ENCODE measurements at regions of chr6 and their contacts with region 1.

Region 1: GRCh38 chr6:154156135-154156896 is 117.3 kb downstream of the OPRM1 start:
- DNase-seq: peak; percentile 52 to 63
- H3K4me3 ChIP-seq: no peak overlapping the region
- H3K27ac ChIP-seq: no peak overlapping the region
- H3K4me1 ChIP-seq: 0 out of 2 replicates have a peak, but pooled peaks cover 3% of the 10 kb centered on the region
- H3K27me3 ChIP-seq: no peaks in the 10 kb centered on the region
- CTCF ChIP-seq: peak; percentile 63

Region 2: DNA sequence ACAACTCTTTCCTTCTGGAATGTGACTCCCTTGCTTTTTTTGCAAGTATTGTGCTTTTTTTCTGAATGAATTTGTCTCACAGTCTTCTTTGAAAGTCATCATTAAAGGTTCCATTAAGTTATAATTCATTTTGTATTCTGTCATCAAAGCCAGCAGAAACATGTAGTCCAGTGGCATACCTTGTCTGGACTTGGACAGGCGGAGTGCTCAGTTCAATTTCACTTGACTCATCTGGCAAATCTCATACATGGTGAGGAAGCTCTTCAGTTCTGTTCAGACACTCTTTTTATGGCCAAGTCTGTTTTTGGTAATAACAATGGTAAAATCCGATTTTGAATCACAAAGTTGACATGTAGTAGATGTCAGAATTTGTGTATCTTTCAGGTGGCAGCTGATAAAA is 378.1 kb before region 1 on chr6:
- CTCF ChIA-PET with region 1: no interaction called
- POLR2A ChIA-PET with region 1: no interaction called
- intact Hi-C with region 1: no loop called
- DNase-seq: no peak
- H3K4me3 ChIP-seq: no peak overlapping the region
- H3K27ac ChIP-seq: no peak overlapping the region
- H3K4me1 ChIP-seq: no peaks in the 10 kb centered on the region
- H3K27me3 ChIP-seq: no peaks in the 10 kb centered on the region
- CTCF ChIP-seq: no peak

Region 3: GRCh38 chr6:154276810-154277628 is 120.7 kb after region 1 on chr6:
- CTCF ChIA-PET with region 1: interaction called, 6 read pairs
- POLR2A ChIA-PET with region 1: no interaction called
- intact Hi-C with region 1: loop called (anchors 5 kb)
- DNase-seq: peak in 1 of 2 experiments; percentile 40
- H3K4me3 ChIP-seq: no peak overlapping the region
- H3K27ac ChIP-seq: no peak overlapping the region
- H3K4me1 ChIP-seq: no peaks in the 10 kb centered on the region
- H3K27me3 ChIP-seq: no peaks in the 10 kb centered on the region
- CTCF ChIP-seq: peak; percentile 68

Region 4: DNA sequence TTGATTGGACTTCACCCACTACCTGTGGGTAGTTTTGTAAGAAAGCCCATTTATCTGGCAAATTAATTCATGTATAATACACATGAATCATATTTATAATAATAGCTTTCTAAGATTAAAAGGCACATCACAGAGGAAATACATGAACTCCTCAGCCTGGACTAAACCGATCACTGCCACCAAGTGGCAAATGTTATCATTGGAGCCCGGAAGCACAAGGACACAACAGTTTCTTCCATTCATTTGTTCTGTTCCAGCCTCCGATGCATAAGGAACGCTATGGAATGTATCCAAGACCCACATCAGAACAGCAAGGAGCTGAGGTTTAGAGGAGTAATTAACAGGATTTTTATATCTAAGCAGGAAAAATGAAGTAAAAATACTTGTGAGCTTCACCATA is 214.2 kb after region 1 on chr6:
- CTCF ChIA-PET with region 1: no interaction called
- POLR2A ChIA-PET with region 1: no interaction called
- intact Hi-C with region 1: loop called (anchors 10 kb)
- DNase-seq: no peak
- H3K4me3 ChIP-seq: no peak overlapping the region
- H3K27ac ChIP-seq: no peak overlapping the region
- H3K4me1 ChIP-seq: peaks cover 12% of the 10 kb centered on the region
- H3K27me3 ChIP-seq: no peaks in the 10 kb centered on the region
- CTCF ChIP-seq: peak; percentile 44; the same call in 1 of the 2 replicates

Region 5: DNA sequence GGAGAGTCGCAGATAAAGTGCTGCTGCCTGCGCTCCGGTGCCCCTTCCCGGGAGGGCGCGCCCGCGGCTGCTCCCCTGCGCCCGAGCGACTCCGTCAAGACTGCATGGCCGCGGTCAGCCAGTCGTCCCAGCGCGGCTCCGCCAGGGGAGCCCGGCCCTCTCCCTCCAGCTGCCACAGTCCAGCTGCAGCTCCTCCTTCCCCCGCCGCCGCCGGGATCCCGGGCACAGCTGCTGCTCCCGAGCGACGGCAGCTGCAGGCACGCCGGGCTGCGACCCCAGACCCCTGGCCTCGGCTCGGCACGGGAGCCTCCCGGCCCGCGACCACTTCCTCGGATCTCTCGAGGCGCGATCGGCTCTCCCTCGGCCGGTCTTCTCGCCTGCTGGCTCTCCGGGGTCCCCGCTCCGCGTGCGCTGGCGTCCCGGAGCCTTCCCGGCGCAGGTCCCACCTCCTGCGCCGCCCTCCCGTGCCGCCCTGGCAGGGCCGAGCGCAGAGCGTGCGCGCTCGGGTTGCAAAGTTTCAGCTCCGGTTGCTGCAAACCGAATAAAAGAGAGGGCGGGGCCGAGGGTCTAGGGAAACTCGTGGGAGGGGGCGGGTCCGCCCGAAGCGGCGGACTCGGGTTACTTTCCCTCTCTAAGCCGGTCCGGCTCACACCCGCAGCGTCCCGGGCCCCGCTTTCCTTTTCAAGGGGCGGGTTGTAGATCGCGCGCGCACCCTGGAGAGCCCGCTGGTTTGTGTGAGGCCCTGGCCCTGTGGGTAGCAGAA is 354.0 kb after region 1 on chr6 and contains the start of gene CNKSR3:
- CTCF ChIA-PET with region 1: no interaction called
- POLR2A ChIA-PET with region 1: no interaction called
- intact Hi-C with region 1: loop called (anchors 1 kb)
- DNase-seq: peak; percentile 71 to 80
- H3K4me3 ChIP-seq: peak within 1 kb of the TSS; percentile 94
- H3K27ac ChIP-seq: peak within 1 kb of the TSS; percentile 66
- H3K4me1 ChIP-seq: peaks cover 23% of the 10 kb centered on the region
- H3K27me3 ChIP-seq: no peaks in the 10 kb centered on the region
- CTCF ChIP-seq: no peak
- total RNA-seq, gene CNKSR3: 3.4 and 4.7 TPM in 2 replicates

Region 6: GRCh38 chr6:154675602-154676088 is 519.3 kb after region 1 on chr6:
- CTCF ChIA-PET with region 1: no interaction called
- POLR2A ChIA-PET with region 1: no interaction called
- intact Hi-C with region 1: loop called (anchors 1 kb)
- DNase-seq: peak; percentile 77 to 85
- H3K4me3 ChIP-seq: no peak overlapping the region
- H3K27ac ChIP-seq: no peak overlapping the region
- H3K4me1 ChIP-seq: no peaks in the 10 kb centered on the region
- H3K27me3 ChIP-seq: no peaks in the 10 kb centered on the region
- CTCF ChIP-seq: peak; percentile 99

Region 7: GRCh38 chr6:155174576-155175211 is 1018.4 kb after region 1 on chr6:
- CTCF ChIA-PET with region 1: no interaction called
- POLR2A ChIA-PET with region 1: no interaction called
- intact Hi-C with region 1: loop called (anchors 10 kb)
- DNase-seq: peak; percentile 60 to 81
- H3K4me3 ChIP-seq: no peak overlapping the region
- H3K27ac ChIP-seq: no peak overlapping the region
- H3K4me1 ChIP-seq: peaks cover 16% of the 10 kb centered on the region
- H3K27me3 ChIP-seq: no peaks in the 10 kb centered on the region
- CTCF ChIP-seq: peak; percentile 71

Measured in PC-9 (cell line).